OCI-LY7 (cell line): ENCODE measurements at regions of chr7 and their contacts with region 1.

Region 1: GRCh38 chr7:44999245-45000095 is 531 bp upstream of the CCM2 start:
- DNase-seq: peak; percentile 100
- H3K4me3 ChIP-seq: peak overlapping the region; percentile 86
- H3K27ac ChIP-seq: peak overlapping the region; percentile 93
- H3K4me1 ChIP-seq: peaks cover 78% of the 10 kb centered on the region
- CTCF ChIP-seq: no peak

Region 2: DNA sequence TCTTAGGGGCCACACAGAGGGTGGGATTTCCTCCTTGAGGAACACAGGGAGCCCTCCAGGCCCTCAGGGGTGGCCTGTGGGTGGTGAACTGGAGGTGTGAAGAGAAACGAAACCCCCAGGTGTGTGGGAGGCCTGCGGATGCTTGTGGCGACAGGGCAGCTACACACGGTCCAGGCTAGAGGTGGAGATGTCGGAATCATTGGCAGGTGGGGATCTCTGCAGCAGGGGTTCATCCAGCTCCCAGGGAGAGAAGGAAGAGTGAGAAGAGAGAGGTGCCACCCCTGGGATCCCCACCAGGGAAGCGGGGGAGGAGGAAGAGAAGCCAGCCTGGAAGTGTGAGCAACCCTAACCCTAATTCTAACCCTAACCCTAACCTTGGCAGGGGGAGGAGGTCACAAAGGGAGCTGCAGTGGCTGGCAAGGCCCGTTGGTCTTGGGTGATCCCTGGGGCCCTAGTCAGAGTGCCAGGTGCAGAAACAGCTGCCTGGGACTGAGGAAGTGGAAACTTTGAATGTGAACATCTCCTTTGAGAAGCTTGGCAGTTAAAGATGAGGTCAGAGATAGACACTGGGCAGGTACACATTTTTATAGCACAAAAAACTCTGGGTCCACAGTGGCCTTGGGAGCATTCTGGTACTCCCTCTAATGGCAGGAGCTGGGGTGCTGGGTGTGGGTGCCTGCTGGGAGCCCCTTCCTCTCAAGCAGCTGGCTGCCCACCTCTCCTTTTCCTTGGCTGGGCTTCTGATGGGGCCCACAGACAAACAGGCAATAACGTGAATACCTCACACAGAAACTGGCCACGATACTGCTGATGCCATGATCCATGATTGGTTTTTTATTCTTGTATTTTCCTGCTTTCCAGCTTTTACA is 902.2 kb before region 1 on chr7:
- CTCF ChIA-PET with region 1: no interaction called
- POLR2A ChIA-PET with region 1: no interaction called
- intact Hi-C with region 1: loop called (anchors 5 kb)
- DNase-seq: peak; percentile 98
- H3K4me3 ChIP-seq: peak overlapping the region; percentile 35
- H3K27ac ChIP-seq: peak overlapping the region; percentile 98
- H3K4me1 ChIP-seq: peaks cover 100% of the 10 kb centered on the region
- CTCF ChIP-seq: peak; percentile 58

Region 3: DNA sequence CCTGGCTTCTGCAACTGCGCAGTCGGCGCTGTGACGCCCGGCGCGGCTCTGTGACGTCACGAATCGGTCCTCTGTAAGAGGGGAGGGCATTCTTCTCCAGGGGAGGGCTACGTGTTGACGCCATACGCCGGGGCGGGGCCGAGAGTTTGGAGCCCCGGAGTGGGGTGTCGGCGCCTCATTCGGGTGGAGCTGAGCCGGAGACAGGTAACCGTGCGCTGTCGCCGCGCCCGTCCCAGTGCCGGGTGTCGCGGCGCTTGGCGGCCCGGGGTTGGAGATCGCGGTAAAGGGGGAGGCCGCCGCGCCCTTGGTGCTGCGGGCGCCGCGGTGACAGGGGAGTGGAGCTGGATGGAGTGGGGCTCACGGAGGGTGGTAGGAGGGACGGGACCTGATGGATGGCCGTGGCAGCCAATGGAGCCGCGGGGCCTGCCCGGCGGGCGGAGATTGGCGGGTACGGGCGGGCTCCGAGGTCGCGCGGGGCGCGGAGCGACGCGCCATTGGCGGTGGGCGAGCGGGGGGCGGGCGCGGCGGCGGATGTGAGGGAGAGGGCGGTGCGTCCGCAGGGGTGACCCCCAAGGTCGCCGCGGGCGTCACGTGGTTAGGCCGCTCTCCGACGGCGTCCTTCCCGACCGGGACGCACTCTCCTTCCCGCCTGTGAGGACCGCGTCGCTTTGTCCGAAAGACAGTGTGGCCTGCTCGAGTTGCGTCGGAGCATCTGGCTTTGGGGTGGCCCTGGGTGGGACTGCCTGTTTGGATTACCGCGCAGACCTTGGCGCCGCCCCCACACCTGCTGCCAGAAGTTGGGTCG is 392.8 kb before region 1 on chr7 and contains the start of gene OGDH:
- CTCF ChIA-PET with region 1: no interaction called
- POLR2A ChIA-PET with region 1: no interaction called
- intact Hi-C with region 1: loop called (anchors 2 kb)
- DNase-seq: peak; percentile 99
- H3K4me3 ChIP-seq: peak within 1 kb of the TSS; percentile 77
- H3K27ac ChIP-seq: peak within 1 kb of the TSS; percentile 71
- H3K4me1 ChIP-seq: peaks cover 33% of the 10 kb centered on the region
- CTCF ChIP-seq: no peak
- total RNA-seq, gene OGDH: 32.6 and 47.6 TPM in 2 replicates

Region 4: DNA sequence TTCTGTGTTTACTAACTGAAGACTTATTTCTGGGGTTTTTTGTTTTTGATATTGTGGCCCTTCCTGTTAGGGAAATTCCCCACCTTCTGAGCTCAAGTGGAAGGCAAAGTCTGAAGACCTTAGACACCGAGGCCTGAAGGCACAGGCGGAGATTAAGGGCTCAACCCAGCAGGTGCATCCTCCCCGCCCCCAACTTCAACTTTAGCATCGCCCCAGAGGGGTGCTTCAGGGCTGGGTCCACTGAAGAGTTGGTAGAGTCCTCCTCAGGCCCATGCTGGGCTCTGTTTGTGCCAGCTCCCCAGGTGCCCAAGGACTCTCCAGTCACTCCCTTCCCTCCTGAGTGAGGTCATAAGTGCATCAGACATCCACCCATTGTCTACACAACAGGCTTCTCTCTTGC is 212.4 kb before region 1 on chr7:
- CTCF ChIA-PET with region 1: no interaction called
- POLR2A ChIA-PET with region 1: no interaction called
- intact Hi-C with region 1: no loop called
- DNase-seq: no peak
- H3K4me3 ChIP-seq: no peak overlapping the region
- H3K27ac ChIP-seq: no peak overlapping the region
- H3K4me1 ChIP-seq: no peaks in the 10 kb centered on the region
- CTCF ChIP-seq: no peak

Region 5: GRCh38 chr7:44986218-44987053 is 13.0 kb before region 1 on chr7:
- CTCF ChIA-PET with region 1: interaction called, 6 read pairs
- POLR2A ChIA-PET with region 1: interaction called, 206 read pairs
- intact Hi-C with region 1: loop called (anchors 1 kb)
- DNase-seq: peak; percentile 95
- H3K4me3 ChIP-seq: peak overlapping the region; percentile 94
- H3K27ac ChIP-seq: peak overlapping the region; percentile 70
- H3K4me1 ChIP-seq: peaks cover 55% of the 10 kb centered on the region
- CTCF ChIP-seq: no peak

Region 6: DNA sequence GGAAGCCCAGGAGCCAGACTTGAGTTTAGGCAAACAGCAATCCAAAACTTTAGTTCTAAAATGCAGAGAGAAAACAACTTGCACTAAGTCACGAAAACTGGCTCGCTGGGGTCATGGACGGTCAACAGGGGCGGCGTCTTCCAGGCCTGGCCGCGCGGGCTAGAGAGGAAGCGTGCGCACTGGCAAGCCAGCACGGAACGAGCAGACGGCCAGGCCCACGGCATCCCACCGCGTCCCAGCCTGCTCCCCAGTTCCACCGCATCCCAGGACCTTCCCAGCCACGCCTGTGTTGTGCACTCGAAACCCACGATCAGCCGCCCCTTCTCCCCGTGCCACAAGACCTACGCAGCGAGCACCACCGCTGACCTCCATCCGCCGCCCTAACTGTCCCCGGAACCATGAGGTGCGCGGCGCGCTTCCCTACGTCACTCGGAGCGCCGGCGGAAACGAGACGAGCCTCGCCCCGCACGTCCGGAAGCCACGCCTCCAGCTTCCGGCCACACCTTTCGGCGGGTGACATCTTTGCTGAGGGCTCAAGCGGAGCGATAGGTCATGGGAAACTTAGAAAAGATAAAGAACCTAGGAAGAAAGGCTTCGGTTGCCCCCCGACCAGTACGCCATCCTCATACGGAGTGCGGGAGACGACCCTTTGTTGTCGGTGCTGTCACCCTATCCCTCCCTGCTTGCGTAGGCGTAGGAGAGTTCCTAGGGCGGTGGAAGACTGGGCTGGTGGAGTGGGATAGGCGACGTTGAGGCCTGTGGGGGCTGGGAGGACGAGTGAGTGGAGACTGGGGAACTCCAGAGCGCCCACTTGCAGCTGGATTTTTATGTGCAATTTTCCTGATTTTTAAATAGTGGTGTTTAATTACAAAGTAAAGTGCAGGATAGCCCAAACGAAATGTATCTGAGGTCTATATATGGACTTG is 112.1 kb after region 1 on chr7 and contains the start of gene TBRG4:
- CTCF ChIA-PET with region 1: no interaction called
- POLR2A ChIA-PET with region 1: interaction called, 14 read pairs
- intact Hi-C with region 1: loop called (anchors 1 kb)
- DNase-seq: peak; percentile 97
- H3K4me3 ChIP-seq: peak within 1 kb of the TSS; percentile 85
- H3K27ac ChIP-seq: peak within 1 kb of the TSS; percentile 80
- H3K4me1 ChIP-seq: peaks cover 46% of the 10 kb centered on the region
- CTCF ChIP-seq: peak; percentile 77
- total RNA-seq, gene TBRG4: 113 and 117 TPM in 2 replicates